Heart right ventricle (tissue), 16 donors: ENCODE measurements at regions of chr7 and their contacts with region 1.

Region 1: DNA sequence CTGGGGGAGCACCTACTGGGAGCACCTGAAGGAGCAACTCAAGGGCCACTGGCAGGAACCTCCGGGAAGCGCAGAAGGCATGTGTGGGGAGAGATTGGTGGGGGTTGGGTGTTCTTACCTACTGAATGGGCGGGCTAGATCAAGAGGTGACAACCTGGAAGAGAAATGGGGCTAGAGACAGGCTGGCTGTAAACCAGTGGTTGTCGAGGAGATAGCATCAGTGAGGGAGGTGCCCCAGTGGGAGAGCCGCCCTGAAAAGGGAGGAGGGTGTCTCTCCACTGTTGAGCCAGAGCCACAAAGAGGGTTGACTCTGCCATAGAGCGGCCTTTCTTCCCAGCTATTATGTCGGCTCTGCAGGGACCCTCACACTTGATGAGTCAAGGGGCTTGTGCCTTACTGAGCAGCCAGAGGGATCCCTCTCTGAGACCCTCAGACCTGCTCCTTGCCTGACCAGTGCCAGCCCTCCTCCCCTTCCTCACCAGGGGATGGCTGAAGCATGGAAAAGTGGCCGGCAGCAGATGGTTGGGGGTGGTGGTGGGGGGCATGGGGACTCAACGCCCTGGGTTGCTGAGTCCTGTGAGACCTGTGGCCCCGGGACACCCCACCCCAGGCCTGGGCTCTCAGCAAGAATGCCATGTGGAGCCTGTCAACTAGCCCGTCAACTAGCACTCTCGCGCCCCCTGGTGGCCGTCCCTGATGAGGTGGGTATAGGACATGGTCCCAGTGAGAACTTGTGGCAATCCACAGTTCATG is 36.5 kb upstream of the PURB start:
- DNase-seq: peak; percentile 89 to 94
- ATAC-seq: peak; percentile 94 to 97 (median 96)
- H3K4me3 ChIP-seq: no peak overlapping the region
- H3K27ac ChIP-seq: no peak overlapping the region
- H3K4me1 ChIP-seq: peaks cover 0 to 4% (median 0%) of the 10 kb centered on the region in 9 donors
- H3K27me3 ChIP-seq: peaks cover 0 to 4% (median 0%) of the 10 kb centered on the region in 7 donors
- CTCF ChIP-seq: peak; percentile 85 to 94 (median 92)

Region 2: DNA sequence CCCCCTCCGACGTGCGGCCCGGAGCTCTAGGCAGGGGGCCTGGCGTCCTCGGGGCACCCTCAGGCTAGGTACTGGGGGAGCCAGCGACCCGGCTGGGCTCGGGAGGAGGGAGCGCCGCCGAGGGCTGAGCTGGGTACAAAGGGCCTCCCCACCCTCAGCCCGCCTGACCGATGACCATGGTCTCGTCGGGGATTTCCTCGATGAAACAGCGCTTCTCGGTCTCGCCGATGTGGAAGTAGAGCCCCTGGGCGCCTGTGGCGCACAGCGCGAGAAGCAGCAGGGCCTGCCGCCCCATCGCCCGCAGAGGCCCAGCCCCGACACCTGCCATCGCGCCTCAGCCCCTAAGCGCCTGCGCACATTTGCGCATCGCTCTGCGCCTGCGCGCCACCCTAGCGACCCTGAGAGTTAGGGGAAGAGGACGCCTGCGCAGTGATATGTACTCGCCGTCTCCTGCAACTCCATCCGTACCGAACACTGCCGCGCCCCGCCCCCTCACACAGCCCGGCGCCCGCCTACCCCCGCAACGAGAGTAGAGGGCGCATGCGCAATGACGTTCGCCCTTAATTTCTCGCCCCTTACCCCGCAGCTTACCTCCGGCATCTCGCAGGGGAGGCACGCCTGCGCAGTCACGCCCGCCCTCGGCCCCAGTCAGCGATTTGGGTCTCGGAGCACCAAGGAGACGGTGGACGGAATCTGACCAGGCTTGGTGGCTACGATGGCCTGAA is 339.7 kb before region 1 on chr7 and contains the start of gene TMED4:
- intact Hi-C with region 1: loop called in 6 of 10 experiments (anchors 5 kb)
- DNase-seq: peak; percentile 99 to 100
- ATAC-seq: peak; percentile 98 to 99 (median 98)
- H3K4me3 ChIP-seq: peak within 1 kb of the TSS; percentile 72 to 99 (median 89)
- H3K27ac ChIP-seq: peak within 1 kb of the TSS; percentile 86 to 99 (median 96)
- H3K4me1 ChIP-seq: peaks cover 5 to 34% (median 24%) of the 10 kb centered on the region in 9 donors
- H3K27me3 ChIP-seq: no peaks in the 10 kb centered on the region
- CTCF ChIP-seq: no peak
- total RNA-seq, gene TMED4: 55.4 to 81.4 (median 69.4) TPM

Region 3: GRCh38 chr7:44587843-44588711 is 333.7 kb before region 1 on chr7:
- intact Hi-C with region 1: loop called in 9 of 10 experiments (anchors 2 to 10 kb)
- DNase-seq: peak in 1 of 2 donors; percentile 55
- ATAC-seq: peak; percentile 16 to 74 (median 70)
- H3K4me3 ChIP-seq: no peak overlapping the region
- H3K27ac ChIP-seq: no peak overlapping the region
- H3K4me1 ChIP-seq: peaks cover 0 to 7% (median 4%) of the 10 kb centered on the region in 9 donors
- H3K27me3 ChIP-seq: no peaks in the 10 kb centered on the region
- CTCF ChIP-seq: peak; percentile 30 to 81 (median 72)

Region 4: DNA sequence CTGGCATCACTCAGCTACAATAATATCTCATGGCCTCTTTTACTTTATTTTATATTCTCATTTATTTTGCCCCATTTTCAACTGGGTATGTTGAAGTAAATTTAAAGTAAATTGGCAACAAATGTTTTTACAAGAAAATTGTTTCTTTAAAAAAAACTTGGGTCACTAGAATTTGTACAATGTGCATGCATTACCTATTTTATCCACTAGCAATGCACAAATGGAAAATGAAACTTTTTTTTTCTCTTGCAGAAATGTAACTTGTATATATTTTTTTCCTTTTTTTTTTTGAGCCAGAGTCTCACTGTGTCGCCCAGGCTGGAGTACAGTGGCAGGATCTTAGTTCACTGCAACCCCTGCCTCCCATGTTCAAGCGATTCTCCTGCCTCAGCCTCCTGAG is 63.6 kb before region 1 on chr7:
- intact Hi-C with region 1: loop called (anchors 1 to 5 kb)
- DNase-seq: no peak
- ATAC-seq: no peak
- H3K4me3 ChIP-seq: no peak overlapping the region
- H3K27ac ChIP-seq: no peak overlapping the region
- H3K4me1 ChIP-seq: peaks cover 0 to 7% (median 0%) of the 10 kb centered on the region in 9 donors
- H3K27me3 ChIP-seq: peaks cover 0 to 9% (median 0%) of the 10 kb centered on the region in 7 donors
- CTCF ChIP-seq: peak in 1 of 9 donors; percentile 14

Region 5: GRCh38 chr7:44867073-44867995 is 54.4 kb before region 1 on chr7:
- intact Hi-C with region 1: loop called in 1 of 10 experiments (anchors 5 kb)
- DNase-seq: no peak
- ATAC-seq: peak in 6 of 8 donors; percentile 45 to 86 (median 60)
- H3K4me3 ChIP-seq: no peak overlapping the region
- H3K27ac ChIP-seq: peak overlapping the region in 1 of 10 donors; percentile 28
- H3K4me1 ChIP-seq: peaks cover 0 to 12% (median 5%) of the 10 kb centered on the region in 9 donors
- H3K27me3 ChIP-seq: no peaks in the 10 kb centered on the region
- CTCF ChIP-seq: no peak